ENCODE measurements at regions of chr3 and their contacts with region 1.

Region 1: GRCh38 chr3:16205156-16205870 is 30.8 kb downstream of the GALNT15 start:
- DNase-seq: no peak
- ATAC-seq: no peak
- H3K4me3 ChIP-seq: no peak overlapping the region
- H3K27ac ChIP-seq: no peak overlapping the region
- H3K4me1 ChIP-seq: no peaks in the 10 kb centered on the region
- H3K27me3 ChIP-seq: no peaks in the 10 kb centered on the region
- CTCF ChIP-seq: no peak

Region 2: DNA sequence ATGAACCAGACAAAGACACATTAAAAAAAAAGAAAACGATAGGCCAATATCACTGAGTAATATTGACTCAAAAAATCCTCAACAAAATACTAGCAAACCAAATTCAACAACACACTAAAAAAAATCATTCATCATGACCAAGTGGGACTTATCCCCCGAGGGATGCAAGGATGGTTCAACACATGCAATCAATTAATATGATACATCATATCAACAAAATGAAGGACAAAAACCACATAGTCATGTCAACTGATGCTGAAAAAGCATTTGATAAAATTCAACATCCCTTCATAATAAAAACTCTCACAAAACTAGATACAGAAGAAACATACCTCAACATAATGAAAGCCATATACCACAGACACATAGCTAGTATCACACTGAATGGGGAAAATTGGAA is 365.7 kb before region 1 on chr3:
- CTCF ChIA-PET with region 1: interaction called, 10 read pairs
- POLR2A ChIA-PET with region 1: no interaction called
- in situ Hi-C with region 1: no loop called
- intact Hi-C with region 1: no loop called
- DNase-seq: no peak
- ATAC-seq: no peak
- H3K4me3 ChIP-seq: no peak overlapping the region
- H3K27ac ChIP-seq: no peak overlapping the region
- H3K4me1 ChIP-seq: no peaks in the 10 kb centered on the region
- H3K27me3 ChIP-seq: no peaks in the 10 kb centered on the region
- CTCF ChIP-seq: no peak

Measured in Panc1 (cell line).